ENCODE measurements at regions of chr11 and their contacts with region 1.

Region 1: GRCh38 chr11:65569973-65570918 is at the start of gene ZNRD2:
- DNase-seq: peak; percentile 97
- ATAC-seq: peak; percentile 77
- H3K4me3 ChIP-seq: peak within 1 kb of the TSS; percentile 84
- H3K27ac ChIP-seq: peak within 1 kb of the TSS; percentile 76
- H3K4me1 ChIP-seq: peaks cover 33% of the 10 kb centered on the region
- H3K27me3 ChIP-seq: no peaks in the 10 kb centered on the region
- CTCF ChIP-seq: peak; percentile 69 to 79 (median 69)
- EP300 ChIP-seq: peak in 1 of 2 experiments; percentile 22; a peak in 2 of 4 replicates
- POLR2A ChIP-seq: peak; percentile 78
- RAD21 ChIP-seq: peak; percentile 55
- polyA plus RNA-seq, gene ZNRD2: 14.8 to 48.7 TPM

Region 2: DNA sequence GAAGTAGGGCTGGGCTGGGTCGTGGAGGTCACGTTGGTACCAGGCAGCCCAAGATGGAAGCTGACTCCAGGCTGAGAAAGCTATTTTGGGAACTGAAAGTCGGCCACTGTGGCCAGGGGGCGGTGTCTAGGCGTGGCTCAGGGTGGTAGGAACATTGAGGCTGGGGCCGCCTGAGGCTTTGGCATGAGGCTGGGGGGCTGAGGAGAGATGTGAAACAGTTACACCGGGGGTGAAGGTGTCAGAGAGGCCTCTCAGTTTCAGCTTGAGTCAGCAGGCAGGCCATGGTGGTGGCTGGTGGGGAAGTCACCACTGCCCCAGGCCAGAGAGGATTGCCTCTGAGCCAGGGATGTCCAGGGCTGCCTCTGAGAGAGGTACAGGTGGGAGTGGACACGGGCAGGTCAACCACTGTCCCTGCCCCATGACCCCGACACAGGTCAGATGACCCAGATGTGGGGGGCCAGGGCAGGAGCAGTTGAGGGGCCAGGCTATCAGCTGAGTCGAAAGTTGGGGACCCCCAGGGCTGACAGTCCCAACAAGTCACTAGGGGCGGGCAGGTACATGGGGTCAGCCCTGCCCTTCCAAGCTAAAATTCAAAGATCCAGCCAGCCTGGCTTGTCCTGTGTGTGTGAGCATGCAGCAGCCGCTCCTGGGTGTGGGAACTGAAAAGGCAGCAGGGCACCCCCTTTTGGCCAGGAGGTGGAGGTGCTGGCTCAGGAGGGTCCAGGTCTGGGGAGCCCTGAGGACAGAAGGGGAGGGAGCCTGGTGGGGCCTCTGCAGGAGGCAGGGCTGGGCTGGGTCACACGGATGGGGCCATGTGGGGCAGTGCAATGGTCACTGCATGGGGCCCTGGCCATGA is 18.2 kb after region 1 on chr11:
- CTCF ChIA-PET with region 1: interaction called, 130 read pairs
- POLR2A ChIA-PET with region 1: interaction called, 129 read pairs
- RAD21 ChIA-PET with region 1: interaction called, 132 read pairs
- SMC1A ChIA-PET with region 1: interaction called, 93 read pairs
- in situ Hi-C with region 1: no loop called
- intact Hi-C with region 1: loop called (anchors 1 kb)
- DNase-seq: peak; percentile 96
- ATAC-seq: peak; percentile 87
- H3K4me3 ChIP-seq: peak overlapping the region; percentile 58; the same call in 1 of the 2 replicates
- H3K27ac ChIP-seq: peak overlapping the region; percentile 97
- H3K4me1 ChIP-seq: peaks cover 45% of the 10 kb centered on the region
- H3K27me3 ChIP-seq: no peaks in the 10 kb centered on the region
- CTCF ChIP-seq: peak; percentile 83 to 91 (median 88)
- EP300 ChIP-seq: peak; percentile 82 to 95
- POLR2A ChIP-seq: peak; percentile 71
- RAD21 ChIP-seq: peak; percentile 86

Region 3: DNA sequence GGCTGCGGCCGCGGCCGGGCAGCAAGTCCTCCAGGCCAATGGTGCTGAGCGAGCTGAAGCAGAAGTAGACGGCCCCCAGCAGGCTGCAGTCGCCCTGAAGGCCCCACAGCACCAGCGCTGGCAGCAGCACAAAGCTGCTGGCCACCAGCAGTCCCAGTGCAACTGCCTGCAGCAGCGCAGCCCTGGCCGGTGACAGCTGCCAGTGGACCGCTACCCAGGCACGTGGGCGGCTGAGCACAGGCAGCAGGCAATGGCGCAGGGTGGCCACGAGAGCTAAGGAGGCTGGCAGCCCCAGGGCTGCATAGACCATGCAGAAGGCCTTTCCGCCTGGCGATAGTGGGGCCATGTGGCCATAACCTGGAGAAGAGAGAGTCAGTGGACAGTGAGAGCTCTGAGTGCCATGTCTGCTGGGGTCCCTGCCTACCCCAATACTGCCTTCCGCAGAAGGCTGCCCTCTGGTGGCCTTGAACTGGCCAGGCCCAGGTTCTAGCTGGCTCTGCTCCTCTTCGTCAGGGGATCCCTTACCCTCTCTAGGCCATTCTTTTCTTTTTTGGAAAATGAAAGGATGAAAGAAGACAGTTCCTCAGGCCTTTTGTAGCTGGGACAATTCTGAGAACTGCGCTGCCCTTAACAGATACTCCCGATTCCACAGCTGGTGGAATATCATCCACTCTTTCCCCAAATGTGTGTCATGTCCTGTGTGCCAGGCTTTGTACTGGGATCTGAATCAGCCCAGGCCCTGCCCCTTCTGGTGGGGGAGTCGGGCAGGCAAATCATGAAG is 23.5 kb after region 1 on chr11:
- CTCF ChIA-PET with region 1: interaction called, 130 read pairs
- POLR2A ChIA-PET with region 1: interaction called, 129 read pairs
- RAD21 ChIA-PET with region 1: interaction called, 132 read pairs
- SMC1A ChIA-PET with region 1: interaction called, 93 read pairs
- in situ Hi-C with region 1: no loop called
- intact Hi-C with region 1: loop called (anchors 1 kb)
- DNase-seq: no peak
- ATAC-seq: peak; percentile 68
- H3K4me3 ChIP-seq: no peak overlapping the region
- H3K27ac ChIP-seq: no peak overlapping the region
- H3K4me1 ChIP-seq: peaks cover 11% of the 10 kb centered on the region
- H3K27me3 ChIP-seq: no peaks in the 10 kb centered on the region
- CTCF ChIP-seq: peak; percentile 62 to 71 (median 63)
- EP300 ChIP-seq: no peak
- POLR2A ChIP-seq: peak; percentile 48
- RAD21 ChIP-seq: peak; percentile 44

Region 4: DNA sequence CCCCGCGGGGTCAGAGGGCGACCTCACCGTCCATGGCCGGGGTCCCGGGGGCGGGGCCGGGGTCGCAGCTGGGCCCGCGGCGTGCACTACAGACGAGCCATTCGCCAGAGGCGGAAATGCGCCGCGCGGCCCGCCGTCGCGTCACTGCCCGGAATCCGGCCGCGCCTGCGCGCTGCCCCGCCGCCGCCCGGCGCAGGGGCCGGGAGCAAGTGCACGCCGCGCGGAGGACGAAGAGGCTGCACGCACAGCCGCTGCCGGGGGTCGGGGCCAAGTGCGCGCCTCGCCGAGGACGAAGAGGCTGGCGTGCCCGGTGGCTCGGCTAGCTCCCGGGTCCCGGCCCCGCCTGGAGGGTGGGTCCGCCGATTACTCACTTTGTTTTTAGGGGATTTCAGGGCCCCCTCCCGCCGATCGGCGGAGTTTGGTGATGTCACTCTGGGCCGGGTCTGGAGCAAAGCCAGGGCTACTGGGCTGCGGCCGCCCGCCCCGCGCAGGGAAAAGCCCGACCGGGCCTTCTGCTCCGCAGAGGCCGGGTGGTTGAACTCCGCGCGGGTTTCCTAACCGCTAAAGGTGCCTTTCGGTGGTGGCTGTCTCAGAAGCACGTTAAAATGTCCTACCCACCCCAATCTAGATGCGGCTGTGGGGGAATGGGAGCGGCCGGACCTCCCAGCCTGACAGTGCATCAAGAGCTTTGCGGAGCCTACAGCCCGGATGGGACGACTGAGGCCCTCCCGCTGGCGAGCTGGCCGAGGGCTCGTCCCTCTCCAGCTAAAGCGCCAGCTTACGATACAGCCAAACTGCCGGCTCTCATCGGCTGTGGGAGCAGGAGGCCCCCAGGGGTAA is 92.8 kb after region 1 on chr11 and contains the start of gene RELA:
- CTCF ChIA-PET with region 1: interaction called, 3 read pairs
- POLR2A ChIA-PET with region 1: no interaction called
- RAD21 ChIA-PET with region 1: interaction called, 4 read pairs
- SMC1A ChIA-PET with region 1: no interaction called
- in situ Hi-C with region 1: no loop called
- intact Hi-C with region 1: loop called (anchors 1 kb)
- DNase-seq: no peak
- ATAC-seq: peak; percentile 84
- H3K4me3 ChIP-seq: peak within 1 kb of the TSS; percentile 91
- H3K27ac ChIP-seq: peak within 1 kb of the TSS; percentile 98
- H3K4me1 ChIP-seq: peaks cover 9% of the 10 kb centered on the region
- H3K27me3 ChIP-seq: no peaks in the 10 kb centered on the region
- CTCF ChIP-seq: no peak
- EP300 ChIP-seq: 0 out of 4 replicates have a peak, but pooled peaks of 1 of the 2 experiments have one; percentile 24
- POLR2A ChIP-seq: peak; percentile 79
- RAD21 ChIP-seq: no peak
- polyA plus RNA-seq, gene RELA: 5.1 to 12.8 TPM

Region 5: DNA sequence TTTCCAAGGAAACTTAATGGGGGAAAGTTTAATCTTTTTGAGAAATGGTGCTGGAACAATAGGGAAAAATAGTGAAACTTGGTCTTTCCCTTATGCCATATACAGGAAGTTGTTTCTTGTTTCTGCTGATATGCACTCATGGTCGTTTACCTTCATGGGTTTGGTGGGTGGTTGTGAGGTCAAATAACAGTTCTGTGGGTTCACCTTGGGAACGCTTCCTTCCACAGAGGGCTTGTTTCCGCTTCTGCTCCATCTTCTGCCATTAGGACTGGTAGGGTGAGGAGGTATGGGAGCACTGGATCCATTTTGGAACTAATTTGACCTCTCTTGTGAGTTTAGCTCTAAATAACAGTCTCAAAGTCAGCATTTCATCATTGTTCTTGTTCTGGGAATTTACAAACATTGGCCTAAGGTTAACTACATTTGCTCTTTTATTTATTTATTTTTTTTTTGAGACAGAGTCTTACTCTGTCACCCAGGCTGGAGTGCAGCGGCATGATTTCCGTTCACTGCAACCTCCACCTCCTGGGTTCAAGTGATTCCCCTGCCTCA is 110.0 kb after region 1 on chr11:
- CTCF ChIA-PET with region 1: no interaction called
- POLR2A ChIA-PET with region 1: no interaction called
- RAD21 ChIA-PET with region 1: no interaction called
- SMC1A ChIA-PET with region 1: no interaction called
- in situ Hi-C with region 1: no loop called
- intact Hi-C with region 1: no loop called
- DNase-seq: no peak
- ATAC-seq: no peak
- H3K4me3 ChIP-seq: no peak overlapping the region
- H3K27ac ChIP-seq: no peak overlapping the region
- H3K4me1 ChIP-seq: no peaks in the 10 kb centered on the region
- H3K27me3 ChIP-seq: no peaks in the 10 kb centered on the region
- CTCF ChIP-seq: no peak
- EP300 ChIP-seq: no peak
- POLR2A ChIP-seq: no peak
- RAD21 ChIP-seq: no peak

Region 6: DNA sequence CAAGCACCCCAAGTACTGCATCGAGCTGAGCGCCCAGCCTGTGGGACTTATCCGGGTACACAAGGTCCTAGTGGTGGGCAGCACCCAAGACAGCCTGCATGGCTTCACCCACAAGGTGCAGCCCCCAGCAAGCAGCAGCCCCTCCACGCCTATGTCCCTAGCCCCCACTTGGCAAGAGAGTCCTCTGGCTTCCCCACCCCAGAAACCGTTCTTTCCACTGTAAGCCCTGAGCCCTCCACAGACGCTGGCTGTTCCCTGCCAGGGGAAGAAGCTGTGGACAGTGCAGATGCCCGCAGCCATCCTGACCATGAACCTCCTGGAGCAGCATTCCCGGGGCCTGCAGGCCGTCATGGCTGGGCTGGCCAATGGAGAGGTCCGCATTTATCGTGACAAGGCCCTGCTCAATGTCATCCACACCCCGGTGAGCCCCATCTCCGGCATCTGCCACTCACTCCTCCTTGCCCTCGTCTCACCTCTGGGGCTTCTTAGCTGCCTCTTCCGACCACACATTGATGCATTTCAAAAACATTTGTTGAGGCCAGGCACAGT is 953.3 kb after region 1 on chr11:
- CTCF ChIA-PET with region 1: no interaction called
- POLR2A ChIA-PET with region 1: no interaction called
- RAD21 ChIA-PET with region 1: no interaction called
- SMC1A ChIA-PET with region 1: no interaction called
- in situ Hi-C with region 1: no loop called
- intact Hi-C with region 1: no loop called
- DNase-seq: no peak
- ATAC-seq: no peak
- H3K4me3 ChIP-seq: no peak overlapping the region
- H3K27ac ChIP-seq: no peak overlapping the region
- H3K4me1 ChIP-seq: no peaks in the 10 kb centered on the region
- H3K27me3 ChIP-seq: no peaks in the 10 kb centered on the region
- CTCF ChIP-seq: no peak
- EP300 ChIP-seq: no peak
- POLR2A ChIP-seq: no peak
- RAD21 ChIP-seq: no peak

Measured in GM12878 (cell line).